GM13977 (cell line): ENCODE measurements at regions of chr5 and their contacts with region 1.

Region 1: GRCh38 chr5:142922223-142922952 is 152.2 kb downstream of the ARHGAP26 start:
- DNase-seq: peak; percentile 56
- CTCF ChIP-seq: peak; percentile 54

Region 2: DNA sequence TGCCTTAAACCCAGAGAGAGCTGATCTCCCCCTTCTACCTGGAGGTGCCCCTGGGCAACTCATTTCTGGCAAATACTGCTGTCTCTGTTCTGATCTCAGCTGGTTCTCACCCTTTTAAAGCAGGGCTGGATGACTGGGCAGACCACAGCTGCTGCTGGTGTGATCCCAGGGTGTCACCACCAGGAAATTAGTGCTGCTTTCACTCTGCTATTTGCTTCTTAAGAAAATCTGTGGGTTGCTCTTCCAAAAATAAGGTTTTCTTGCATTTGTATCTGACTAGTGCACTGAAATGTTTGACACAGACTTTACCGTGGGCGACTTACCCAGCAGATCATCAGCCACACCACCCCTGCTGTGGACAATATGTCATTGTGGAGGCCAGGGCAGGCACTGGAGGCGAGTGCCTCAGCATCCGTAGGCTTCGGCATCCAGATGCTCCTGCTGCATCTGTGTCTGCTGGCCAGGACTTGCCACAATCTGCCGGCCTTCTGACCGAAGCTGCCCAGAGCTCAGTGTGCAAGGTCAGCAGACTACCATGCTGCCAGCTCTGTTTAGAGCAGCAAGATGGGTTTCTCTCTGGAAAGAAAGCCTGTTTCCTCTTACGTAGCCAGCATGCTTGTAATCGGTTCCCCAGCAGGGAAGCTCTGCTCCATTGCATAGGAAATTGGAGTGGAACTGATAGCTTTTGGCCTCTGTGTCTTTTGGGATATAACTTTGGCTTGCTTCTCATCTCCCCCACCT is 138.6 kb before region 1 on chr5:
- in situ Hi-C with region 1: no loop called
- DNase-seq: no peak
- CTCF ChIP-seq: no peak

Region 3: GRCh38 chr5:142982821-142983200 is 60.4 kb after region 1 on chr5:
- in situ Hi-C with region 1: no loop called
- DNase-seq: no peak
- CTCF ChIP-seq: peak; percentile 26

Region 4: GRCh38 chr5:143824851-143825720 is 902.7 kb after region 1 on chr5:
- in situ Hi-C with region 1: loop called (anchors 25 kb)
- DNase-seq: peak; percentile 56
- CTCF ChIP-seq: peak; percentile 94

Region 5: GRCh38 chr5:143968011-143968878 is 1045.9 kb after region 1 on chr5:
- in situ Hi-C with region 1: loop called (anchors 25 kb)
- DNase-seq: peak; percentile 34
- CTCF ChIP-seq: peak; percentile 58